Calu3 (cell line): ENCODE measurements at regions of chr7 and their contacts with region 1.

Region 1: DNA sequence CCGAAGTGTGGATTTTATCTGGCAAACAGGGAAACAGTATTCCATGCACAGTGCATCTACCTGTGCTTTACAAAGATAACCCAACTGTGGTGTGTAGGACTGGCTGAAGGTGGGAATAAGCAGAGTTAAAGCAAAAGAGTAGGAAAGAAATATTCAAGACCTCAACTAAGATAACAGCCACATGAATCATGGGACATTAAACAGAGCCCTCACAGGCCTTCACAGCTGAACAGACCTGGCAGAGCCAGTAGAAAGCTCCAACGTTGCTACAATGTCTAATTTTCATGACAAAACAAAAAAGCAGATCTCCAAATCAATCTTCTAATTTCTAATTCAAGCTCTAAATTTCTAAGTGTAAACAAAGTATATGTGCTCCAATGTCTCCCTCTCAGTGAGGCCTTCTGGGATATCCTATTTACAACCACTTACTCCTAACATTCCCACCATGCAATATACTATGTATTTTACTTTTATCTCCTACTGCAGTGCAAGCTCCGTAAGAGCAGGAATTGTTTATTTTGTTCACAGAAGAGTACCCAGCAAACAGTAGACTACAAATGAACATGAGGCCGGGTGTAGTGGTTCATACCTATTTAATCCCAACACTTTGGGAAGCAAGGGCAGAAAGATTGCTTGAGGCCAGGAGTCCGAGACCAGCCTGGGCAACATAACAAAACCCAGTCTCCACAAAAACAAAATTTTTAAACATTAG is 63.5 kb downstream of the UBE2H start:
- DNase-seq: no peak
- H3K4me3 Mint-ChIP-seq: no peak overlapping the region
- H3K27ac Mint-ChIP-seq: no peak overlapping the region
- H3K4me1 Mint-ChIP-seq: peaks cover 28% of the 10 kb centered on the region
- H3K27me3 Mint-ChIP-seq: no peaks in the 10 kb centered on the region
- CTCF ChIP-seq: no peak

Region 2: DNA sequence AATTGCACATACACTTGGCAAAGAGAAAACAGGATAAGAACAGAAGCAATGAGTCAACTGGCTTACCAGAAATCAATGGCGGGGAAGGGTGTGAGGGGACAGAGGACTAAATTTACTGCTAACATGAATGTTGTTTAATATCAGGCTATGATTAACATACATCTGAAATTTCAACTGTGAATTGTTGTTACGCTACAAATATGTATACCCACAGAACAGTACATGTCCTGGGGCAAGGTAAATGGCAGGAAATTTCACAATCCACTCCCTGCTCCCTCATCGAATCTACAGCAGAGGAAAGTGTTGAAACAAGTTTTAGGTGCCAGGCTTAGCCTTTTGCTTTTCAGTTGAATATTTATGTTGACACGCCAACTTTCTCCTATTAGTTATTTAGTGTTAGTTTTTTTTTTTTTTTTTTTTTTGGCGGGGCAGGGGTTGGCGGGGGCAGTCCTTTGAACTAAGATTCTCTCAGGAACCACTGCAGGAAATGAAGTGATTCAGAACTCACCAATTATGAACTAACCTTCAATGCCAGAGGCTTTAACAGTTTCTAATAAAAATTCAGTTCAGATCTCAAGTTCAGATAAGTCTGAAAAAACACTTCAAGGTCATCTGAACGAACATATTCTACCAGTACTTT is 35.5 kb before region 1 on chr7:
- CTCF ChIA-PET with region 1: no interaction called
- intact Hi-C with region 1: loop called (anchors 5 kb)
- DNase-seq: peak; percentile 22
- H3K4me3 Mint-ChIP-seq: peak overlapping the region; percentile 39
- H3K27ac Mint-ChIP-seq: peak overlapping the region; percentile 23
- H3K4me1 Mint-ChIP-seq: peaks cover 67% of the 10 kb centered on the region
- H3K27me3 Mint-ChIP-seq: no peaks in the 10 kb centered on the region
- CTCF ChIP-seq: no peak